Transverse colon (tissue), 4 donors: ENCODE measurements at regions of chr19 and their contacts with region 1.

Region 1: DNA sequence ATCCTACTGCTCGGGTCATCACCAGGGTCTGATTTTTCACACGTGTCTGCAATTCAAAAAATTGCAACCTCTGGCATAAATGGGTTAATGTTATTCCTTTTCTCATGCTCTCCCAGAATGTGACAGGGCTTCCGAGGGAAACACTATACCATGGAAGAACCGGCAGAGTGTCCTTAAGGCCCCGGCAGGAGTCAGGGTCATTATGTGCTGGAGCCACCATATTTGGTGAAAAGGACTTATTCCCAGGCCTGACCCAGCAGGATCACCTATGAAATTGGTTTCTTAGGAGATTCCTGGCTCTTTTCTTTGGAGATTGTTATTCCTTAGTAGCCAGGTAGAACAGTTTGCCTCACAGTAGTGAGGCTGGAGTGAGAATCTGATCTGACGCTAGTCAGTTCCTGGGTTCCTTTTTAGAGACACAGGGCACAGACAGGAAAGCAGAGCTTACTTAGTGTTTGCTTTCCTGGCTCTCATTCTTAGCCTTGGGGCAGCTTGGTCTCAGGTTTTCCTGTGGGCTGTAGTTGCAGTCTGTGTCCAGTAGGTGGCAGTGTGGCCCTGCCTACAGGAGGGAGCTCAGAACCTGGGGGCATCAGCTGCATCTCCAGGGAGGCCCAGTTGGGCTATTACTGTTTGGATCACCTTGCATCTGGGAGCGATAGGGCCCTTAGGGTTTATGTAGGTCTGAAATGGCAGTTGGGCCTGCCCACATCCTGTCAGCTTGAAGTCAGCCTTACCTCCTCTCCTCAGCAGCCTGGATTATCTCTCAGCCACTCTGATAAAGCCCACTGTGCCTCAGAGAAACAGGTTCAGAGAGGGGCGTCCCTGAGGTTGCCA is 12.4 kb downstream of the SNRNP70 start:
- DNase-seq: peak; percentile 77
- H3K4me3 ChIP-seq: no peak overlapping the region
- H3K27ac ChIP-seq: no peak overlapping the region
- H3K4me1 ChIP-seq: peaks cover 0 to 3% (median 0%) of the 10 kb centered on the region in 4 donors
- H3K27me3 ChIP-seq: no peaks in the 10 kb centered on the region
- CTCF ChIP-seq: peak; percentile 96 to 100 (median 99)
- EP300 ChIP-seq: no peak
- POLR2A ChIP-seq: no peak

Region 2: GRCh38 chr19:48954595-48955310 is 142.9 kb before region 1 on chr19 and contains the start of gene BAX:
- in situ Hi-C with region 1: no loop called
- intact Hi-C with region 1: no loop called
- DNase-seq: peak; percentile 98
- H3K4me3 ChIP-seq: peak within 1 kb of the TSS; percentile 76 to 99 (median 94)
- H3K27ac ChIP-seq: peak within 1 kb of the TSS; percentile 87 to 93 (median 90)
- H3K4me1 ChIP-seq: peaks cover 7 to 17% (median 16%) of the 10 kb centered on the region in 4 donors
- H3K27me3 ChIP-seq: no peaks in the 10 kb centered on the region
- CTCF ChIP-seq: peak in 2 of 5 experiments; percentile 12 to 23
- EP300 ChIP-seq: no peak
- POLR2A ChIP-seq: peak; percentile 56
- total RNA-seq, gene BAX: 74.5 to 152 (median 112) TPM

Region 3: GRCh38 chr19:49127674-49128544 is 30.2 kb after region 1 on chr19:
- in situ Hi-C with region 1: no loop called
- intact Hi-C with region 1: no loop called
- DNase-seq: peak; percentile 98
- H3K4me3 ChIP-seq: peak overlapping the region in 3 of 4 donors; percentile 11 to 41 (median 21)
- H3K27ac ChIP-seq: peak overlapping the region; percentile 65 to 78 (median 76)
- H3K4me1 ChIP-seq: peaks cover 6 to 34% (median 16%) of the 10 kb centered on the region in 4 donors
- H3K27me3 ChIP-seq: no peaks in the 10 kb centered on the region
- CTCF ChIP-seq: peak in 4 of 5 experiments; percentile 14 to 58 (median 29)
- EP300 ChIP-seq: no peak
- POLR2A ChIP-seq: no peak

Region 4: GRCh38 chr19:49148784-49149651 is 51.3 kb after region 1 on chr19:
- in situ Hi-C with region 1: loop called in 2 of 4 experiments (anchors 10 kb)
- intact Hi-C with region 1: loop called (anchors 5 kb)
- DNase-seq: peak; percentile 100
- H3K4me3 ChIP-seq: peak overlapping the region; percentile 54 to 78 (median 64)
- H3K27ac ChIP-seq: peak overlapping the region; percentile 83 to 94 (median 92)
- H3K4me1 ChIP-seq: peaks cover 17 to 52% (median 35%) of the 10 kb centered on the region in 4 donors
- H3K27me3 ChIP-seq: no peaks in the 10 kb centered on the region
- CTCF ChIP-seq: no peak
- EP300 ChIP-seq: no peak
- POLR2A ChIP-seq: peak; percentile 87

Region 5: GRCh38 chr19:49200238-49200862 is 102.7 kb after region 1 on chr19:
- in situ Hi-C with region 1: loop called in 2 of 4 experiments (anchors 10 to 25 kb)
- intact Hi-C with region 1: loop called (anchors 5 kb)
- DNase-seq: peak; percentile 61
- H3K4me3 ChIP-seq: no peak overlapping the region
- H3K27ac ChIP-seq: peak overlapping the region; percentile 64 to 84 (median 70)
- H3K4me1 ChIP-seq: peaks cover 9 to 65% (median 47%) of the 10 kb centered on the region in 4 donors
- H3K27me3 ChIP-seq: no peaks in the 10 kb centered on the region
- CTCF ChIP-seq: no peak
- EP300 ChIP-seq: no peak
- POLR2A ChIP-seq: no peak

Region 6: GRCh38 chr19:49224856-49225255 is 127.2 kb after region 1 on chr19:
- in situ Hi-C with region 1: loop called in 2 of 4 experiments (anchors 5 to 25 kb)
- intact Hi-C with region 1: no loop called
- DNase-seq: peak; percentile 77
- H3K4me3 ChIP-seq: no peak overlapping the region
- H3K27ac ChIP-seq: no peak overlapping the region
- H3K4me1 ChIP-seq: peaks cover 0 to 8% (median 1%) of the 10 kb centered on the region in 4 donors
- H3K27me3 ChIP-seq: no peaks in the 10 kb centered on the region
- CTCF ChIP-seq: peak; percentile 26 to 62 (median 52)
- EP300 ChIP-seq: no peak
- POLR2A ChIP-seq: no peak